Posterior vena cava (tissue), 2 donors: ENCODE measurements at regions of chr9 and their contacts with region 1.

Region 1: GRCh38 chr9:129776938-129777768 is 24.3 kb upstream of the PTGES start:
- DNase-seq: peak; percentile 99

Region 2: GRCh38 chr9:129712634-129713401 is 64.3 kb before region 1 on chr9:
- intact Hi-C with region 1: no loop called
- DNase-seq: no peak

Region 3: GRCh38 chr9:129752915-129753729 is 24.0 kb before region 1 on chr9 and contains the start of gene PTGES:
- intact Hi-C with region 1: no loop called
- DNase-seq: peak; percentile 89
- total RNA-seq, gene PTGES: 7.9 to 15.9 TPM

Region 4: DNA sequence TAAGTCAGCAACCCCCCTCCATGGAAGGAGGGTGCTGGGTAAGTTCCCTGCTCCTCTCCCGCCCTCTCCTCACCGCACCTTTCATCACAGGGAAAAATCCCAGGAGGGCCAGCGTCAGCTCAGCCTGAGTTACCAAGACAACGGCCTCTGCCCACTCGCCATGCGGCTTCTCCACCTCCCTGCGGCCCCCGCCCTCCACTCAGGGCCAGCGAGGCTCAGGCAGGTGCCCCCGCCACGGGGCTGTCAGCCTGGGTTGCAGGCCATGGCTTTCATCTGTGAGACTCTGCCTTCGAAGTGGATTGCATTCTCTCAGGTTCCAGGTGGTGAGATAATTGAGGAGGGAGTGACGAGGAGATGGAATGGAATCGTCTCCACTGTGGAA is 1204.6 kb after region 1 on chr9:
- intact Hi-C with region 1: loop called in 1 of 2 experiments (anchors 5 kb)
- DNase-seq: no peak